B cell (primary cell): ENCODE measurements at regions of chr19 and their contacts with region 1.

Region 1: GRCh38 chr19:11964858-11965645 is at the start of gene ZNF763:
- DNase-seq: peak; percentile 95
- ATAC-seq: peak; percentile 91
- H3K4me3 ChIP-seq: peak within 1 kb of the TSS; percentile 76 to 97 (median 89)
- H3K4me3 Mint-ChIP-seq: peak within 1 kb of the TSS; percentile 99
- H3K27ac ChIP-seq: peak within 1 kb of the TSS; percentile 99
- H3K27ac Mint-ChIP-seq: peak within 1 kb of the TSS; percentile 99
- H3K4me1 ChIP-seq: peaks cover 14 to 20% of the 10 kb centered on the region in 2 donors
- H3K4me1 Mint-ChIP-seq: peaks cover 27% of the 10 kb centered on the region
- H3K27me3 ChIP-seq: no peaks in the 10 kb centered on the region
- H3K27me3 Mint-ChIP-seq: no peaks in the 10 kb centered on the region
- CTCF ChIP-seq: no peak
- total RNA-seq, gene ZNF763: 14.2 and 16.6 TPM in 2 replicates

Region 2: GRCh38 chr19:11881151-11881800 is 83.8 kb before region 1 on chr19:
- CTCF ChIA-PET with region 1: interaction called, 11 read pairs
- POLR2A ChIA-PET with region 1: no interaction called
- intact Hi-C with region 1: no loop called
- DNase-seq: peak; percentile 78
- ATAC-seq: peak; percentile 56
- H3K4me3 ChIP-seq: no peak overlapping the region
- H3K4me3 Mint-ChIP-seq: no peak overlapping the region
- H3K27ac ChIP-seq: no peak overlapping the region
- H3K27ac Mint-ChIP-seq: no peak overlapping the region
- H3K4me1 ChIP-seq: peaks cover 0 to 6% of the 10 kb centered on the region in 2 donors
- H3K4me1 Mint-ChIP-seq: peaks cover 4% of the 10 kb centered on the region
- H3K27me3 ChIP-seq: no peaks in the 10 kb centered on the region
- H3K27me3 Mint-ChIP-seq: no peaks in the 10 kb centered on the region
- CTCF ChIP-seq: peak; percentile 77

Region 3: GRCh38 chr19:11948646-11949045 is 16.4 kb before region 1 on chr19:
- CTCF ChIA-PET with region 1: interaction called, 12 read pairs
- POLR2A ChIA-PET with region 1: no interaction called
- intact Hi-C with region 1: no loop called
- DNase-seq: no peak
- ATAC-seq: no peak
- H3K4me3 ChIP-seq: no peak overlapping the region
- H3K4me3 Mint-ChIP-seq: no peak overlapping the region
- H3K27ac ChIP-seq: no peak overlapping the region
- H3K27ac Mint-ChIP-seq: no peak overlapping the region
- H3K4me1 ChIP-seq: no peaks in the 10 kb centered on the region
- H3K4me1 Mint-ChIP-seq: no peaks in the 10 kb centered on the region
- H3K27me3 ChIP-seq: no peaks in the 10 kb centered on the region
- H3K27me3 Mint-ChIP-seq: no peaks in the 10 kb centered on the region
- CTCF ChIP-seq: no peak

Region 4: DNA sequence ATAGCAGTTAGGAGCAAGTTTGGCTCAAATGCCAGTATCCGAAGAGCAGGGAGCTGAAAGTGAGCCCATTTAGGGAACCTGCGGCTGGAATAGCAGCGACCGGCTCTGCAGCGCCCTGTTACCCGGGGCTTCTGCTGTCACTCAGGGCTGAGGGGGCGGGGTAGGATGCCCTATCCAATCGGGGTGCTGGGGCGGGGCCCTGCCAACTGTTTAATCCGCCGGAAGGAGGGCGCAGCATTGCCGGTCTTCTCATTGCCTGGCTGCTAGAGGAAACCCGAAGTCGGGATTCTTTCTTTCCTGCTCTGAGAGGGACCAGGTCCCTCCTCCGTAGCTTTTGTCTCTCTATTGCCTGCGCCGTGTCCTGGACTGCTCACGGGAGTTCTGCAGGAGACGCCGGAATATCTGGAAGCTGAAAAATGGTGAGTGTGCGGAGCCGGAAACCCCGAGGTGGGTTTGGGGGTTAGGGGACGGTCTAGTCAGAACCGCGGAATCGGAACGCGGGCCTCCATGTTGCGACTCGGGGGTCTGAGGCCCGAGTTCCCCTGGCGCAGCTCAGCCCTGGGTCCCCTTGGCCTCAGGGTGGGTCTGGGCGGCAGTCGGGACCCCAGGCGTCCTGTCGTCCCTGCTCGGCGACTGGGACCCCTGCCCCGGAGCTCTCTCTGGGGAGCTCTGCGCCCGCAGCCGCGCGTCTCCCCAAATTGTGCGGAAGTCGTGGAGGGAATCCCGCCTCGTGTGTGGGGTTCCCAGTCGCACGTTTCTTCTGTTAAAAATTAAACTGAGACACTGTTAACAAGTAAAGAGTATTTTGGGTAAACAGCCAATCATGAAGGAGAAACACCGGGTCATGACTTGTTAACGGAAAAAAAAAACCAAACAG is 22.6 kb after region 1 on chr19:
- CTCF ChIA-PET with region 1: interaction called, 130 read pairs
- POLR2A ChIA-PET with region 1: interaction called, 38 read pairs
- intact Hi-C with region 1: loop called (anchors 1 kb)
- DNase-seq: peak; percentile 93
- ATAC-seq: peak; percentile 93
- H3K4me3 ChIP-seq: peak overlapping the region; percentile 86 to 98 (median 97)
- H3K4me3 Mint-ChIP-seq: peak overlapping the region; percentile 96
- H3K27ac ChIP-seq: peak overlapping the region; percentile 85 to 92
- H3K27ac Mint-ChIP-seq: peak overlapping the region; percentile 89
- H3K4me1 ChIP-seq: peaks cover 0 to 5% of the 10 kb centered on the region in 2 donors
- H3K4me1 Mint-ChIP-seq: peaks cover 24% of the 10 kb centered on the region
- H3K27me3 ChIP-seq: no peaks in the 10 kb centered on the region
- H3K27me3 Mint-ChIP-seq: no peaks in the 10 kb centered on the region
- CTCF ChIP-seq: no peak

Region 5: DNA sequence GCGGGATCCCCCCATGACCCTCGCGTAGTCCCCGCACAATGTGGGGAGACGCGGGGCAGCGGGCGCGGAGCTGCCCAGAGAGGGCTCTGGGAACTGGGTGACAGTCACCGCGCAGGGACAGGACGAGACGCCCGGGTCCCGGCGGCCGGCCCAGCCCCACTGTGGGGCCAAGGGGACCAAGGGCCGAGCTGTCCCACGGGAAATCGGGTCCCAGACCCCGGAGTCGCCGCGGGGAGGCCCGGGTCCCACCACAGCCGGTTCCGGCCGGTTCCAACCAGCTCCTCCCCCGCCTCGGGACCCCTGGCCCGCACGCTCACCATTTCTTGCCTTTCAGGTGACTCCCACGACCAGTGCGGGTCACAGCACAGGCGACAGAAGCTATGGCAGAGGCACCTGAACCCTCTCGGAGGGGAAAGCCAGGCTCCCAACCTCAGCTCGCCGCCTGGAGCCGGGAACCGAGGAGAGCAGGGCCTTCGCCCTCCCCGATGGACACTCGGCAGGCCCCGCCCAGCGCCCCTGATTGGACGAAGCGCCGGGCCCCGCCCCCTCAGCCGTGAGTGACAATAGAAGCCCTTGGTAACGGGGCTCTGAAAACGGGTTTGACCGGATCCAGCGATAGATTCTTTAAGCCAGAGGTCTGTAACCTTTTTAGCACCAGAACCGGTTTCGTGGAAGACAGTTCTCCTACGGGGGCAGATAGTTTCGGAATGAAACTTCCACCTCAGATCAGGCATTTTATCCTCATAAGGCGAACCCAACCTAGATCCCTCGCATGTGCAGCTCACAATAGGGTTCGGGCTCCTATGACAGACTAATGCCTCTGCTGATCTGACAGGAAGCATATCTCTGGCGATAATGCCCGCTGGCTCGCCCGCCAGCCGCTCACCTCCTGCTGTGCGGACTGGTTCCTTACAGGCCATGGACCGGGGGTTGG is 70.4 kb after region 1 on chr19 and contains the start of gene ZNF433:
- CTCF ChIA-PET with region 1: interaction called, 6 read pairs
- POLR2A ChIA-PET with region 1: interaction called, 3 read pairs
- intact Hi-C with region 1: loop called (anchors 2 kb)
- DNase-seq: peak; percentile 78
- ATAC-seq: peak; percentile 97
- H3K4me3 ChIP-seq: peak within 1 kb of the TSS; percentile 60 to 88 (median 73)
- H3K4me3 Mint-ChIP-seq: peak within 1 kb of the TSS; percentile 95
- H3K27ac ChIP-seq: peak within 1 kb of the TSS in 1 of 2 donors; percentile 59
- H3K27ac Mint-ChIP-seq: peak within 1 kb of the TSS; percentile 86
- H3K4me1 ChIP-seq: peaks cover 3 to 13% of the 10 kb centered on the region in 2 donors
- H3K4me1 Mint-ChIP-seq: peaks cover 19% of the 10 kb centered on the region
- H3K27me3 ChIP-seq: no peaks in the 10 kb centered on the region
- H3K27me3 Mint-ChIP-seq: no peaks in the 10 kb centered on the region
- CTCF ChIP-seq: no peak
- total RNA-seq, gene ZNF433: 7.3 and 7.6 TPM in 2 replicates

Region 6: DNA sequence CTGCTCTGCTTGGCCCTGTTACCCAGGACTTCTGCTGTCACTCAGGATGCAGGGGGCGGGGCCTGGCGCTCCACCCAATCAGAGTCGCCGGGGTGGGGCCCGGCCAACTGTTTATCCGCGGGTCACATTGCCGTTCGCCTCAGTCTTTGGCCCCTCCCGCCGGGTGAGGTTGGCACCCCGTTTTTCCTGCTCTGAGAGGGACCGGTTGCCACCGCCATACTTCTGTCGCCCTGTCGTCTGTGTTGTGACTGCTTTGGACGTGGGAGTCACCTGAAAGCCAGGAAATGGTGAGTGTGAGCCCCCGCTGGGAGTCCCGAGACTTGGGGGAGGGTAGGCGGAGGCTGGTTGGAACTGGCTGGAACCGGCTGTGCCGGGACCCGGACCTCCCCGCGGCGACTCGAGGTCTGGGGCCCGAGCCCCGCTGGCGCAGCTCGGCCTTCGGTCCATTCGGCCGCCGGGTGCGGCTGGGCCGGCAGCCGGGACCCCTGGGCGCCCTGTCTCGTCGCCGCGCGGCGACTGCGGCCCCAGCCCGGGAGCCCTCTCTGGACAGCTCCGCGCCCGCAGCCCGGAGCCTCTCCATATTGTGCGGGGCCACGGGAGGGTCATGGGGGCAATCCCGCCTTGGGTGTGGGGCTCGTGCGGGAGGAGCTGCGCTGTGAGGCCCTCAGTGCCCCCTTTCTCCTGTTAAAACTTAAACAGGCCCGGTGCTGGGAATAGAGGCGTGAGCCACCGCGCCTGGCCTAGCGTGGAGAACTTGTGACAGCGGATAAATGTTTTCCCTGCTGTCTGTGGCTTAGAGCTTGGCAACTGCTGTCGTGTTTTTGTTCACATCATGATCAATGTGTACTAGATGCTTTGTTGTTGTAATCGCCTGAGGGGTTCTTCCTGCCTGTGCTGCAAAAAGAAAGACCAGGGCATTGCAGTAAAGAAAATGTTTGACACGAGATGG is 99.8 kb after region 1 on chr19 and contains the start of gene ZNF844:
- CTCF ChIA-PET with region 1: interaction called, 3 read pairs
- POLR2A ChIA-PET with region 1: interaction called, 10 read pairs
- intact Hi-C with region 1: no loop called
- DNase-seq: peak; percentile 89
- ATAC-seq: peak; percentile 96
- H3K4me3 ChIP-seq: peak within 1 kb of the TSS; percentile 73 to 93 (median 76)
- H3K4me3 Mint-ChIP-seq: peak within 1 kb of the TSS; percentile 95
- H3K27ac ChIP-seq: peak within 1 kb of the TSS; percentile 83 to 87
- H3K27ac Mint-ChIP-seq: peak within 1 kb of the TSS; percentile 94
- H3K4me1 ChIP-seq: peaks cover 6 to 16% of the 10 kb centered on the region in 2 donors
- H3K4me1 Mint-ChIP-seq: peaks cover 11% of the 10 kb centered on the region
- H3K27me3 ChIP-seq: no peaks in the 10 kb centered on the region
- H3K27me3 Mint-ChIP-seq: no peaks in the 10 kb centered on the region
- CTCF ChIP-seq: no peak
- total RNA-seq, gene ZNF844: 33.7 and 36.4 TPM in 2 replicates

Region 7: DNA sequence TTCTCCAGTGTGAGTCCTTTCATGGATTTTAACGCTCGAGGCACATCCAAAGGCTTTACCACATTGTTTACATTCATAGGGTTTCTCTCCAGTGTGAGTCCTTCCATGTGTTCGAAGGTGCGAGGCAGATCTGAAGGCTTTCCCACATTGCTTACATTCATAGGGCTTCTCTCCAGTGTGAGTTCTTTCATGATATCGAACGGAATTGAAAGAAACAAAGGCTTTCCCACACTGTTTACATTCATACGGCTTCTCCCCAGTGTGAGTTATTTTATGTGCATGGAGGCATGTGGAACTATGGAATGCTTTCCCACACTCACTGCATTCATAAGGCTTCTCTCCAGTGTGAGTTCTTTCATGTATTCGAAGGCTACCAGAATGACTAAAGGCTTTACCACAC is 180.3 kb after region 1 on chr19:
- CTCF ChIA-PET with region 1: interaction called, 44 read pairs
- POLR2A ChIA-PET with region 1: interaction called, 5 read pairs
- intact Hi-C with region 1: loop called (anchors 1 kb)
- DNase-seq: no peak
- ATAC-seq: no peak
- H3K4me3 ChIP-seq: no peak overlapping the region
- H3K4me3 Mint-ChIP-seq: no peak overlapping the region
- H3K27ac ChIP-seq: no peak overlapping the region
- H3K27ac Mint-ChIP-seq: no peak overlapping the region
- H3K4me1 ChIP-seq: peaks cover 9 to 11% of the 10 kb centered on the region in 2 donors
- H3K4me1 Mint-ChIP-seq: peaks cover 13% of the 10 kb centered on the region
- H3K27me3 ChIP-seq: no peaks in the 10 kb centered on the region
- H3K27me3 Mint-ChIP-seq: no peaks in the 10 kb centered on the region
- CTCF ChIP-seq: no peak

Region 8: GRCh38 chr19:12202250-12202649 is 237.2 kb after region 1 on chr19:
- CTCF ChIA-PET with region 1: no interaction called
- POLR2A ChIA-PET with region 1: no interaction called
- intact Hi-C with region 1: no loop called
- DNase-seq: peak; percentile 53
- ATAC-seq: peak; percentile 33
- H3K4me3 ChIP-seq: no peak overlapping the region
- H3K4me3 Mint-ChIP-seq: no peak overlapping the region
- H3K27ac ChIP-seq: no peak overlapping the region
- H3K27ac Mint-ChIP-seq: no peak overlapping the region
- H3K4me1 ChIP-seq: peaks cover 0 to 3% of the 10 kb centered on the region in 2 donors
- H3K4me1 Mint-ChIP-seq: peaks cover 9% of the 10 kb centered on the region
- H3K27me3 ChIP-seq: no peaks in the 10 kb centered on the region
- H3K27me3 Mint-ChIP-seq: no peaks in the 10 kb centered on the region
- CTCF ChIP-seq: peak; percentile 30